ENCODE measurements at regions of chr4 and their contacts with region 1.

Region 1: DNA sequence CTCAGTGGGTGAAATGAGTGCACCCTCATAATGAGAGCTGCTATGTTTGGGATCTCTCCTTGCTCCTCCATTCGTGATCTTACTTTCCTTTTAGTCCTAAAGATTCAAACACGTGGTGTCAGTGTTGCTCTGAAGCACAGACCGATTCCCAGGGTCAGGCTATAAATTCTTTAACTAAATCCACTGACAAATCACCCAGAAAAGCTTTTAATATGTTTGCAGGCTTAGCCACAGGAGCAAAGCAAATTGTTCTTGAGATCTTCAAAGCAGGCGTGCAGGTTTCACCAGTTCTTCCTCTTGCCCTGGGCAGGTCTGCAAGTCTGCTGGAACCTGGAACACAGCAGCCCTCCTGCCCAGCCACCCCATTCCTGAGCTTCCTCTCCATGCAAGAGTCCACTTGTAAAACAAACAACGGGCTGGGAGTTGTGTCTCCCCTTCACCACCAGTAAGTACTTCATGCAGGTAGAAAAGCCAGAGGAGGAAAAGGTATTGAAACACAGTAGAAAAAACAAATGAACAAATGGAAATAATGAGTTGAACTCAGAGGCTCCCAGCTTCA is 70.1 kb upstream of the ENPP6 start:
- DNase-seq: no peak
- ATAC-seq: peak; percentile 74

Region 2: GRCh38 chr4:184329659-184330400 is 42.1 kb after region 1 on chr4:
- intact Hi-C with region 1: loop called (anchors 5 kb)
- DNase-seq: no peak
- ATAC-seq: peak; percentile 56

Measured in Right ventricle myocardium inferior (tissue), 1 donor.